Endothelial cell of umbilical vein (primary cell): ENCODE measurements at regions of chrX and their contacts with region 1.

Region 1: GRCh38 chrX:13440176-13440575 is 120.3 kb upstream of the ATXN3L start:
- DNase-seq: no peak
- H3K4me3 ChIP-seq: no peak overlapping the region
- H3K27ac ChIP-seq: no peak overlapping the region
- H3K4me1 ChIP-seq: no peaks in the 10 kb centered on the region
- H3K27me3 ChIP-seq: no peaks in the 10 kb centered on the region
- CTCF ChIP-seq: no peak
- POLR2A ChIP-seq: no peak

Region 2: DNA sequence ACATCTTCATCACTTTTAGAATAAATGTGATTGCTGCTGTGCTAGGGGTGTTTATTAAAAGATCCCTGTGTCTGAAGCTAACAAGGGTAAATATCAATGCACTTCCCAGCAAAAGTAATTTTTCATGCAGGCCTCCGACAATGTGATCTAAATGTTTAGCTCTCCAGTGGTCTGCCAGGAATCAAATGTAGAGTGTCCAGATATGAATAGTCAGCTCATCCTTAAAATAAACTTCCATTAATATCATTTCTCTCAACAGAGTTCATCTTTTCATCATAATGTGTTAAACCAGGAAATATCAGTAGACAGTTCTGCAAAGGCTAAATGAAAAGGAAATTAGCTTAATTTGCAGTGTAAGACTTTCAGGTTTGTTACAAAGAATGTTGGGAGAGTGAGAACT is 27.1 kb after region 1 on chrX:
- CTCF ChIA-PET with region 1: no interaction called
- POLR2A ChIA-PET with region 1: no interaction called
- dilution Hi-C with region 1: no loop called
- intact Hi-C with region 1: loop called (anchors 2 kb)
- DNase-seq: no peak
- H3K4me3 ChIP-seq: no peak overlapping the region
- H3K27ac ChIP-seq: no peak overlapping the region
- H3K4me1 ChIP-seq: peaks cover 9% of the 10 kb centered on the region
- H3K27me3 ChIP-seq: no peaks in the 10 kb centered on the region
- CTCF ChIP-seq: no peak
- POLR2A ChIP-seq: no peak